Posterior cingulate gyrus (tissue), 11 donors: ENCODE measurements at regions of chr12 and their contacts with region 1.

Region 1: DNA sequence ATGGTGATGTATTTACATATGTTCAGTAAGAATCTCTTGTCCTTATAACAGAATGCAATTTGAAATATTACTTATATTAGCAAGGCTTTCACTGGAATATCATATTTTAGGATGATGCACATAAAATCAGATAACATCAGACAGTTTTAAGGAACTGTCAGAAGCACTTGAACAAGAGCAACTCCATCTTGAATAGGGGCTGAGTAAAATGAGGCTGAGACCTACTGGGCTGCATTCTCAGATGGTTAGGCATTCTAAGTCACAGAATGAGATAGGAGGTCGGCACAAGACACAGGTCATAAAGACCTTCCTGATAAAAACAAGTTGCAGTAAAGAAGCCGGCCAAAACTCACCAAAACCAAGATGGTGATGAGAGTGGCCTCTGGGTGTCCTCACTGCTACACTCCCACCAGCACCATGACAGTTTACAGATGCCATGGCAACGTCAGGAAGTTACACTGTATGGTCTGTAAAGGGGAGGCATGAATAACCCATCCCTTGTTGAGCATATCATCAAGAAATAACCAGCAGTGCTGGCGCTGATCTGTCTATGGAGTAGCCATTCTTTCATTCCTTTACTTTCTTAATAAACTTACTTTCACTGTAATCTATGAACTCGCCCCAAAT is 27.6 kb upstream of the ETV6 start:
- DNase-seq: peak in 4 of 10 donors; percentile 11 to 37 (median 20)

Region 2: DNA sequence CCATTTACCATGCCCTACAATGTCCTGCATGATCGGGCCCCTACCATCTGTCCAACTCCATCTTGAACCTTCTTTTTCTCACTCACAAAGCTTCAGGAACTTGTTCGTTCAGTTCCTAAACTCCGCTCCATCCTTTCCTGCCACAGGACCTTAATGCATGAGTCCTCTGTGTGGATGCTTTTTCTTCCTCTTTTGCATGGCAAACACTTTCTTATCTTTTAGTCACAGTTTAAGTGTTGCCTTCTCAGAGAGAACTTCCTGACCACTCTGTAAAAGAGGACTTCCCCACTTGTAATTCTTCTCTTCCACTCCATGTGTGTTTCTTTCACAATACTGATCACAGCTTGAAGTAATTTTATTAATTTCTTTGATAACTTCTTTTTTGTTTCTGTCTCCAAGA is 26.8 kb before region 1 on chr12:
- intact Hi-C with region 1: no loop called
- DNase-seq: no peak

Region 3: DNA sequence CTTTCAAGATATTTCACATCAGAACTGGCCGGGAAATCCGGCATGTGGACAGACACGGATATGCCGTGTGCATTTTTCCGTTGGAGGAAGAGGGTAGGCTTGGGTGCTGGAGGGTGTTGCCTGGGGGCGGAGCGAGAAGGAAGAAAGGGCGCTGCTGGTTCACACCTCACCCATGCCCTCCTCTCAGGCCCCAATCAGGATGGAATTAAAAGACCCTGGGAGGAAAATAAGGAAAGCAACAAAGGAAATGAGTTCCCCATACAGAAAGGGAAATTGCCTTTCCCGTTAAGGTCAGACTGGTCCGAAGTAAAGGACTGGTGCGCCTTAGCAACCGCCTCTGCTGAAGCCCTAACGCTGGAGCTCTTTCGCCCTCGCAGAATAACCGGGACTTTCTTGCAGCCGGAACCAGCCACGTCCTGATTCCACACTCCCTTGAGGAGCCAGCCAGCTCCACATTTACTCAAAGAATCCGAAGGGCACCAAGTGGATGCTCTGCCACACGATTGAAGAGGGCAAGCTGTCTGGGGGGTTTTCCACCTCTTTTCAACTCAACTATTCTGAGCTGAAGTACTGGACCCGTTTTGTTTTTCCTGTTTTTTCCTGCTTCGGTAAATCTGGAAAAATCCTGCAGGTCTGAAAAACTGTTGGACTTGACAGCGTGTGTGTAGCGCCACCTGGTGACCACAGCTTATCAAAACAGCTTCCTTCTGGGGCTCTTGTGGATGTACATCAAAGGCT is 411.1 kb after region 1 on chr12:
- intact Hi-C with region 1: loop called (anchors 2 kb)
- DNase-seq: peak; percentile 56 to 97 (median 84)